ENCODE measurements at regions of chr3 and their contacts with region 1.

Region 1: GRCh38 chr3:51995346-51996163 is at the start of gene RPL29:
- DNase-seq: peak; percentile 94
- CTCF ChIP-seq: no peak

Region 2: GRCh38 chr3:51955893-51956770 is 39.4 kb before region 1 on chr3:
- CTCF ChIA-PET with region 1: no interaction called
- POLR2A ChIA-PET with region 1: no interaction called
- DNase-seq: no peak
- CTCF ChIP-seq: peak; percentile 17

Region 3: GRCh38 chr3:51974963-51975851 is 20.3 kb before region 1 on chr3 and contains the start of gene ABHD14A:
- CTCF ChIA-PET with region 1: interaction called, 19 read pairs
- POLR2A ChIA-PET with region 1: interaction called, 6 read pairs
- DNase-seq: peak; percentile 92
- CTCF ChIP-seq: no peak

Region 4: GRCh38 chr3:51982782-51983577 is 12.6 kb before region 1 on chr3 and contains the start of gene ACY1:
- CTCF ChIA-PET with region 1: interaction called, 20 read pairs
- POLR2A ChIA-PET with region 1: interaction called, 30 read pairs
- DNase-seq: peak; percentile 95
- CTCF ChIP-seq: no peak

Region 5: GRCh38 chr3:52144034-52144795 is 148.7 kb after region 1 on chr3:
- CTCF ChIA-PET with region 1: interaction called, 172 read pairs
- POLR2A ChIA-PET with region 1: interaction called, 4 read pairs
- DNase-seq: peak; percentile 88
- CTCF ChIP-seq: peak; percentile 95

Measured in GM10248 (cell line).